Dendritic cell treated with granulocyte-macrophage colony-stimulating factor and Interleukin-4, amounts not matched to agents 40 ng/mL and 50 ng/mL, for 4 days (primary cell): ENCODE measurements at regions of chr11 and their contacts with region 1.

Region 1: DNA sequence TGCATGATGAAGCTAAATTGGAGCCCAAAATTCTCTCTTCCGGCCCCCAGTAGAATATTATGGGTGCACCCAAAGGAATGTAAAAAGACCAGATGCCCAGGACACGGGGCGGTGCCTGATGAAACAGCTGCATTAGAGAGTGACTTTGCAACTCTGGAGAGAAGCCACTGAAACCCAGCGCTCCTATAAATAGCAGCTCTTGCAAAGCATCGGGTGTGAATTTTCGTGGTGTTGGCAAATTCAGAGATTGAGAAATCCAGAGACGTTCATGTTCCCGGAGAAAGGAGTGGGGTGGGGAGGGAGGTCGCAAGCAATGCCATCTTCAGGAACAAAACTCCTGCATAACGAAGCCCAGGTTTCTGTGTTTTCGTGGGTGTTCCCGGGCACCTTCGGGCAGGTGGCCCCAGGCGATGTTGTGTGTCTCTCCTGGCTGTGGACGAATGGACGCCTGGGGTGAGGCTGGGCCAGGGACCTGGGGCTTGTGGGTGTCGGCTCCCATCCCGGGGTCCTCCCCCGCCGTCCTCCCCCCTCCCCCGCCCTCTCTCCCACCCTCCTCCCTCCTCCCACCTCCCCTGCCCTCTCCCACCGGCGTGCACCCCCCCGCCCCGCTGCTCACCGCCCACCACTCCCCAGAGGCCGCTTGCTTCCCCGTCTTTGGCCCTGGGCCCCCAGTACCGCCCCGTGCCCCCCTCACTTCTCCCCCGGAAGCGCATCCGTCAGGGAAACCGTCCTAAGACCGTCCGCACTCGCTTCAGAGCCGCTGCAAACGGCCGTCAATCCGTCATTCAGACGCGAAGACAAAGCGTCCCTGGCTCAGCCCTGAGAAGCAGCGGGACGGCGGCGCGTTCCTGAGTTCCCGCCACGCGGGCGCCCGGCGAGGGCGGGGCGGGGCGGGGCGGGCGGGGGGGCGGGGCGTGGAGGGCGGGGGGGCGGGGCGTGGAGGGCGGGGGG is 26.7 kb upstream of the TOLLIP start:
- H3K4me3 Mint-ChIP-seq: peak overlapping the region; percentile 73
- H3K27ac Mint-ChIP-seq: peak overlapping the region; percentile 69
- H3K4me1 Mint-ChIP-seq: peaks cover 17% of the 10 kb centered on the region
- H3K27me3 Mint-ChIP-seq: peaks cover 8% of the 10 kb centered on the region

Region 2: GRCh38 chr11:1222491-1223345 is 113.4 kb before region 1 on chr11 and contains the start of gene MUC5B:
- intact Hi-C with region 1: no loop called
- H3K4me3 Mint-ChIP-seq: no peak within 1 kb of the TSS
- H3K27ac Mint-ChIP-seq: no peak within 1 kb of the TSS
- H3K4me1 Mint-ChIP-seq: no peaks in the 10 kb centered on the region
- H3K27me3 Mint-ChIP-seq: peaks cover 19% of the 10 kb centered on the region

Region 3: DNA sequence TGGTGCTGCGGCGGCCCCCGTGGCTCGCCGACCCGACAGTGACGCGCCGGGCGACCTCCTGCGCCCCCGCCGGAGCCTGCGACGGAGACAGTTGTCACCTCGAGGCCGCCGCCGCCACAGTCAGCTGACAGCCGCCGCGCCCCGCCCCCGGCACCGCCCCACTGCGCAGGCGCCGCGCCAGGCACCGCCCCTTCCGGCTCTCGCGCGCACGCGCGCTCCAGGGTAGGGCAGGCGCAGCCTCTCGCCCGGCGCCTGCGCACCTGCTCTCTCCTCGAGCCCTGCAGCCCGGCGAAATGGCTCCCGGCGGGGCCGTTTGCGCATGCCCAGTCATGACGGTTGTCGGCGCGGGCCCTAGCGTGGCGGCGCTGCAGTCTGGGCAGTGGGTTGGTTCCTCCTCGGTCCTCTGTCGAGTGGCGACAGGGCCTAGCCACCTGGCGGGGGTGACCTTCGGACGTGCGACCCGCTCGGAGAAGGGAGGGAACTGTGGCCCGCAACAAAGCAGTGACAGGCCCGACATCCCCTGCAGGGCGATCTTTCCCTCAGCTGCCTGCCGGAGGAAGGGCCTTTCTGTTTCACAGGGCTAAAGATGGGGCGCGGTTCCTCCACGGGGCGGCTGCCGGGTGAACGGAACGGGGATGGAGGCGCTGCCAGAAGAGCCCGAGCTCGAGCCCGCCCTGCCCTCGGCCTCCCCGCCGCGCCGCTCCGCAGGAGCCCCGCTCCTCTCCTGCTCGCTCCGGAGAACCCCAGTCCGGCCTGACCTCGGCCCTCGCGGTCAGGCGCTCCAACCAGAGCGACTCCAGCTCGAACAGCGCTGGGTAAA is 26.4 kb before region 1 on chr11 and contains the start of gene TOLLIP:
- intact Hi-C with region 1: loop called (anchors 1 kb)
- H3K4me3 Mint-ChIP-seq: peak within 1 kb of the TSS; percentile 90
- H3K27ac Mint-ChIP-seq: peak within 1 kb of the TSS; percentile 90
- H3K4me1 Mint-ChIP-seq: peaks cover 55% of the 10 kb centered on the region
- H3K27me3 Mint-ChIP-seq: no peaks in the 10 kb centered on the region

Region 4: GRCh38 chr11:1382831-1383607 is 46.9 kb after region 1 on chr11:
- intact Hi-C with region 1: loop called (anchors 5 kb)
- H3K4me3 Mint-ChIP-seq: peak overlapping the region; percentile 82
- H3K27ac Mint-ChIP-seq: peak overlapping the region; percentile 75
- H3K4me1 Mint-ChIP-seq: peaks cover 16% of the 10 kb centered on the region
- H3K27me3 Mint-ChIP-seq: peaks cover 69% of the 10 kb centered on the region